Naive thymus-derived CD8-positive, alpha-beta T cell (primary cell): ENCODE measurements at regions of chr7 and their contacts with region 1.

Region 1: DNA sequence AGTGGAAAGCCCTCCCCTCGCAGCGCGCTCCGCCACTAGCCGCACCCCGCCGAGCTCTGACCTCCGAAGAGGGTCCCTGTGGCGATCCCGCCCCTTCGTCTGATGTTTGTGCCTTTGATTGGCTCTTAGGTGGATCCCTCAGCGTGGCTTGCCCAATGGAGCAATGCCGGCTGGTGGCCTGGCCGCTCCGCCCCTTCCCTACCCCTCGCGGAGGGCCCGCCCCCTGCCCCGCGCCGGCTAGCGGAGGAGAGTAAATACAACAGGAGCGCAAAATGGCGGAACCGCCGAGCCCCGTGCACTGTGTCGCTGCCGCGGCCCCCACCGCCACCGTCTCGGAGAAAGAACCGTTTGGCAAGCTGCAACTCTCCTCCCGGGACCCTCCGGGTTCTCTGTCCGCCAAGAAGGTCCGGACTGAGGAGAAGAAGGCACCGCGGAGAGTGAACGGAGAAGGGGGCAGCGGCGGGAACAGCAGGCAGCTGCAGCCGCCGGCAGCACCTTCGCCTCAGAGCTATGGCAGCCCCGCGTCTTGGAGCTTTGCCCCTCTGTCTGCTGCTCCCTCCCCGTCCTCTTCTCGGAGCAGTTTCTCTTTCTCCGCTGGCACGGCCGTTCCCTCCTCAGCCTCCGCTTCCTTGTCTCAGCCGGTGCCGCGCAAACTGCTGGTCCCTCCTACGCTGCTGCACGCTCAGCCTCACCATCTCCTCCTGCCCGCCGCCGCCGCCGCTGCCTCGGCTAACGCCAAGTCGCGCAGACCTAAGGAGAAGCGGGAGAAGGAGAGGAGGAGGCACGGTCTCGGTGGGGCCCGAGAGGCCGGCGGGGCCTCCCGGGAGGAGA is at the start of gene RSBN1L:
- DNase-seq: peak; percentile 93 to 99 (median 98)
- ATAC-seq: peak; percentile 92 to 94
- H3K4me3 Mint-ChIP-seq: peak within 1 kb of the TSS; percentile 90 to 99 (median 96)
- H3K27ac Mint-ChIP-seq: peak within 1 kb of the TSS; percentile 92 to 99 (median 97)
- H3K4me1 Mint-ChIP-seq: peaks cover 14 to 72% (median 55%) of the 10 kb centered on the region in 4 donors
- H3K27me3 Mint-ChIP-seq: no peaks in the 10 kb centered on the region
- polyA plus RNA-seq, gene RSBN1L: 5.9 to 8.2 (median 6.2) TPM

Region 2: GRCh38 chr7:77798394-77799077 is 102.1 kb after region 1 on chr7 and contains the starts of genes PHTF2 and TMEM60:
- POLR2A ChIA-PET with region 1: interaction called, 15 read pairs
- DNase-seq: peak; percentile 83 to 96 (median 93)
- ATAC-seq: peak; percentile 90 to 92
- H3K4me3 Mint-ChIP-seq: peak within 1 kb of the TSS; percentile 88 to 99 (median 97)
- H3K27ac Mint-ChIP-seq: peak within 1 kb of the TSS; percentile 85 to 97 (median 95)
- H3K4me1 Mint-ChIP-seq: peaks cover 28 to 82% (median 78%) of the 10 kb centered on the region in 4 donors
- H3K27me3 Mint-ChIP-seq: no peaks in the 10 kb centered on the region
- polyA plus RNA-seq, gene PHTF2: 4.5 to 4.9 (median 4.7) TPM
- polyA plus RNA-seq, gene TMEM60: 6.7 to 18.6 (median 9.1) TPM